ENCODE measurements at regions of chr9 and their contacts with region 1.

Region 1: DNA sequence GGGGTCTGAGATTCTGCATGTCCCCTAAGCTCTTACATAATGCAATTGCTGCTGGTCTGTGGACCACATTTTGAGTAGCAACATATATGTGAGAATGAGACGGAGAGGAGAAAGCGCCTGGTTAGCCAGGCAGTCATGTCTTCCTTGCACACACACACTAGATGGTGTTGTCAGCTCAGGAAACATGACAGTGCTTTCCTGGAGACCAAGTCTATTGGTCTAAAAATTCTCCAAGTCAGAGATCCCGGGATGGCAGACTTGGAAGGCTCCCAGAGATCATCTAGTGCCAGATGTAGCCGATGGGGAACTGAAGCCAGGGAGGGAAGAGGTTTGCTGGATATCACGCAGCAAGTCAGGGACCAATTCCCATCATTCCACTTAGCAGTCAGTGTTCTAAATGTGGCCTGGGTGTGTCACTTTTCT is 53.4 kb downstream of the GALNT12 start:
- DNase-seq: peak; percentile 81 to 96 (median 89)
- H3K4me3 ChIP-seq: no peak overlapping the region
- H3K27ac ChIP-seq: peak overlapping the region in 1 of 5 donors; percentile 28
- H3K4me1 ChIP-seq: peaks cover 4 to 6% of the 10 kb centered on the region in 2 donors
- H3K27me3 ChIP-seq: no peaks in the 10 kb centered on the region
- CTCF ChIP-seq: peak; percentile 43 to 87 (median 76)
- POLR2A ChIP-seq: no peak

Region 2: GRCh38 chr9:98635374-98635773 is 225.5 kb before region 1 on chr9:
- intact Hi-C with region 1: no loop called
- DNase-seq: no peak
- H3K4me3 ChIP-seq: no peak overlapping the region
- H3K27ac ChIP-seq: no peak overlapping the region
- H3K4me1 ChIP-seq: no peaks in the 10 kb centered on the region
- H3K27me3 ChIP-seq: no peaks in the 10 kb centered on the region
- CTCF ChIP-seq: no peak
- POLR2A ChIP-seq: no peak

Region 3: GRCh38 chr9:98944057-98944733 is 83.3 kb after region 1 on chr9:
- intact Hi-C with region 1: loop called in 1 of 2 experiments (anchors 10 kb)
- DNase-seq: peak; percentile 36 to 61 (median 47)
- H3K4me3 ChIP-seq: peak overlapping the region in 2 of 4 donors; percentile 64 to 78
- H3K27ac ChIP-seq: peak overlapping the region in 4 of 5 donors; percentile 60 to 86 (median 70)
- H3K4me1 ChIP-seq: peaks cover 0 to 12% of the 10 kb centered on the region in 2 donors
- H3K27me3 ChIP-seq: no peaks in the 10 kb centered on the region
- CTCF ChIP-seq: no peak
- POLR2A ChIP-seq: no peak

Region 4: DNA sequence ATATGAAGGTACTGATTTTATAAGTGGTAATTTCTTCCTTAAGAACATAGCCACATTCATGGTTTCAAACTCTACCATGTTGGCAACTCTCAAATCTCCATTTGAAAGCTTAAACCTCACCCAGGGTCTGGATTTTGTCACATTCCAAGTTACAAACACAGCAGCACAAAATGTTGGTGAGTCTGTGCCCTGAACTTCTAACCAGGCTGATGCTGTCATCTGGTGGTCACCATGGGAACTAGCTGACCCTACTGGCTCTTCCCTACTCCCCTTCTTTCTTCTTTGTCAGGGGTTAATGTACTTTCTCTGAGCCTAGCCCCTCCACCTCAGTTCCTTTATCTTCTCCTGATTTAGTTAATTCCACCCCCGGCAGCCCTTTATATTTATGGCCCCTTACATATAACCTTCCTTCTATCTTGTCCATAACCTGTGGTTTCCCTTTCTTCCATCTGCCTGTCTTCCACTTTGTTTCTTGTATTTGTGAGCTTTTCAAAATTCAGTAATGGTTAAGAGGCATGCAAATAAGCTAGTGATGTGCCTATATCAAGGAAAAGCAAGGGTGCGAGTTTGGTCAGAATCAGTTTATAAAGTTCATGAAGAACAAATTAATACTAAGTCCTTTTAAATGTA is 279.9 kb after region 1 on chr9:
- intact Hi-C with region 1: loop called (anchors 5 to 10 kb)
- DNase-seq: peak; percentile 38 to 69 (median 47)
- H3K4me3 ChIP-seq: no peak overlapping the region
- H3K27ac ChIP-seq: no peak overlapping the region
- H3K4me1 ChIP-seq: no peaks in the 10 kb centered on the region
- H3K27me3 ChIP-seq: no peaks in the 10 kb centered on the region
- CTCF ChIP-seq: peak; percentile 71 to 96 (median 90)
- POLR2A ChIP-seq: no peak